ENCODE measurements at regions of chr22 and their contacts with region 1.

Region 1: DNA sequence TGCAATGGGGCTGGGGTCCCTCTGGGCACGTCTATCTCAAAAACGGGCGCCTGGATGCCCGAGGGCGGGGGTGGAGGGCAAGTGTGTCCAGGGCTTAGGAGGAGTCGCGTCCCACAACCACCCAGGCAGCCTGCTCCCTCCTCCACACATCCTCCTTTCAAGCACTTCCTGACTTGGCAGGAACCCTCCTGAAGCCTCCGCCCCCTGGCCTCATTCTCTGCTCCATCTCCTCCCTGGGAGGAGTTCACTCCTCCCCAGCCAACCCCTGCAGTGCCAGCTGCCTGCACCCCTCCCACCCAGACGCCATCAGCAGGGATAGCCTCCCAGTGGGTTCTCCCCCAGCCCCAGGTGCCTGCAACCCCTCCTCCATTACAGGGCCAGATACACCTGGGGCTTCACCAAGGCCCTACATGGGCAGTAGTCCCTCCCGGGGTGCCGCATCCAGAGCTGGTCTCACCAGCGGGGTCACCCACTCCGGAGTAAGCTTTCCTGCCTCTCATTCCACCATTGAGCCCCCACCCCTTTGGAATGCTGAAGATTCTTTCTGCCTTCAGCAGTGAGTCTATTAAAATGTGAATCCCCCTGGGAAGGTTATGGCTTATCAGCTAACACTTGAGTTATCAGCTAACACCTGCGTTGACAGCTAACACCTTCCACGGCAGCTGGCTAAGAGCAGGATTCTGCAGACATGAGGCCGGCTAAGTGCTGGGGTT is 24.4 kb downstream of the RTN4R start:
- DNase-seq: no peak
- ATAC-seq: no peak
- H3K4me3 ChIP-seq: no peak overlapping the region
- H3K27ac ChIP-seq: no peak overlapping the region
- H3K4me1 ChIP-seq: peaks cover 9 to 11% of the 10 kb centered on the region in 2 donors
- H3K27me3 ChIP-seq: no peaks in the 10 kb centered on the region
- CTCF ChIP-seq: no peak
- POLR2A ChIP-seq: no peak

Region 2: DNA sequence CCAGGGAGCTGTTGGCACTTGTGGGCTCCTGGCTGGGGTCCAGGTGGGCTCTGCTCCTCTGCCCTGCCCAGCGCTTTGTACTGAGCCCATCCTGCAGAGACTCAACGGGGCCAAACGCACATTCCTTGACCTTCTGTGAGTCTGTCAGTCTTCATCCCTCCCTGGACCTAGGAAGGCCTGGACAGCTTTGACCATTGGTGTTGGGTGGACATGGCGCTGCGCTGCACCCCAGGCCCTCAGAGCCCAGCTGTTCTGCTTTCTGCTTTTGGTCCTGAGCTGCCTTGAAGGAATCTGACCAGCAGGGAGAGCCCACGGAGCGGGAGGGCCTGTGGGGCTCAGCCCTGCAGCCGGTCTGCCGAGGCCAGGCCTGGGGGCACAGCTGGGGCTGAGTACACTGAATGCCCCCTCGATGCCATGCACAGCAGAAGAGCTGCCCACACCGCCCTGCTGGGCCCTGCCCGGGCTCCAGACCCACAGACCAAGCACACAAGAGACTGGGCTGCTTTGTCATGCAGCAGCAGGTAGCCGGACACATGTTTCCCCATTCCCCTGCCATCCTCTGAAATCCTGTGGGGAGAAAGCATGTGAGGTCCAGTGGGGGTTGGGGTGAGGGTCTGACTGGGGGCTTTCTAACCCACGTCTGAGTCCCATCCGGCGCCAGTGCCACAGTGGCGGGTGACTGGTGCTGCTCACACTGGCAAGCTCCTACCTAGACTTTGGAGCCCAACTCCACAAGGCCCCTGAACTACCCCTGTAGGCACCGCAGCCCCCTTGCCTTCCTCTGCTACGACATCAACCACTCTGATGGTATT is 68.7 kb before region 1 on chr22:
- in situ Hi-C with region 1: no loop called
- intact Hi-C with region 1: loop called (anchors 10 kb)
- DNase-seq: no peak
- ATAC-seq: no peak
- H3K4me3 ChIP-seq: no peak overlapping the region
- H3K27ac ChIP-seq: no peak overlapping the region
- H3K4me1 ChIP-seq: no peaks in the 10 kb centered on the region
- H3K27me3 ChIP-seq: no peaks in the 10 kb centered on the region
- CTCF ChIP-seq: no peak
- POLR2A ChIP-seq: no peak

Region 3: GRCh38 chr22:20229916-20230775 is 13.5 kb before region 1 on chr22:
- in situ Hi-C with region 1: no loop called
- intact Hi-C with region 1: no loop called
- DNase-seq: no peak
- ATAC-seq: no peak
- H3K4me3 ChIP-seq: no peak overlapping the region
- H3K27ac ChIP-seq: no peak overlapping the region
- H3K4me1 ChIP-seq: no peaks in the 10 kb centered on the region
- H3K27me3 ChIP-seq: no peaks in the 10 kb centered on the region
- CTCF ChIP-seq: no peak
- POLR2A ChIP-seq: no peak

Region 4: DNA sequence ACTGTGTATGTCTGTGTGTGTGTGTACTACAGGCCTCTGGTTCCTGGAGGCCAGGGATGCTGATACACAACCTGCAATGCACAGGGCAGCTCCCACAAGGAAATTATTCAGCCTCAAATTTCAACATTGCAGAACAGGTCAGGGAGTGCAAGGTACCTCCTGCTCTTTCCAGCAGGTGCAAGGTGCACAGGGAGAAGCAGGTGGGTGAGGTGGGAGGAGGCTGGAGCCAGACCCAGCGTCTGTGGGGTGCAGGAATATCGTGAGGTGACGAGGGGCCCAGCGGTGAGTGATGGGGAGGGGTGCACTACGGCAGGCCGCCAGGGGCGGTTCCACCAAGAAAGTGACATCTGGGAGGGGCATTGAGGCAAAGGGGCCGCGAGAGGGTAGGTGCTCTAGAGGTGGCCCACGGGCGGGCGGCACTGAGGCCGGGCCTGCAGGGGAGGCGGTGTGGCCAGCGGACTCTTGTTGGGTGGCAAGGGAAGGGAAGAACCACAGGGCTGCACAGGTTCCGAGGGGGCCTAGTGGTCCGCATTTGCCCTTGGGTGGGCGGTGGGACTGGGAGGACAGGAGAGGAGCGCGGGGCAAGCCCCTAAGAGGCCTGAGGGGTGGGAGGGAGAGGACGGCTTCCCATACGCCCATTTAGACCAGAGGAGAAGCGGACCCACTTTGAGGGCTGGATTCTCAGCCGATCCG is 54.6 kb after region 1 on chr22:
- in situ Hi-C with region 1: no loop called
- intact Hi-C with region 1: no loop called
- DNase-seq: no peak
- ATAC-seq: no peak
- H3K4me3 ChIP-seq: peak overlapping the region; percentile 59 to 67 (median 62)
- H3K27ac ChIP-seq: no peak overlapping the region
- H3K4me1 ChIP-seq: peaks cover 4 to 7% of the 10 kb centered on the region in 2 donors
- H3K27me3 ChIP-seq: peaks cover 17 to 25% (median 22%) of the 10 kb centered on the region in 3 donors
- CTCF ChIP-seq: no peak
- POLR2A ChIP-seq: no peak